Activated T-helper 2 cell treated with anti-CD3 and anti-CD28 coated beads, Interferon-gamma antibody, Interleukin-2, Interleukin-4, amounts not matched to agents 10 μg/mL and 5 μg/mL and 100 μg/mL, durations not matched to agents 14 hours and 24 hours and 36 hours (primary cell): ENCODE measurements at regions of chr1 and their contacts with region 1.

Region 1: GRCh38 chr1:174217787-174218574 is 58.7 kb downstream of the RABGAP1L start:
- DNase-seq: no peak
- H3K4me3 Mint-ChIP-seq: no peak overlapping the region
- H3K27ac Mint-ChIP-seq: no peak overlapping the region
- H3K4me1 Mint-ChIP-seq: no peaks in the 10 kb centered on the region
- H3K27me3 Mint-ChIP-seq: no peaks in the 10 kb centered on the region

Region 2: GRCh38 chr1:173507205-173507846 is 710.7 kb before region 1 on chr1:
- intact Hi-C with region 1: no loop called
- DNase-seq: no peak
- H3K4me3 Mint-ChIP-seq: no peak overlapping the region
- H3K27ac Mint-ChIP-seq: no peak overlapping the region
- H3K4me1 Mint-ChIP-seq: no peaks in the 10 kb centered on the region
- H3K27me3 Mint-ChIP-seq: peaks cover 7% of the 10 kb centered on the region

Region 3: DNA sequence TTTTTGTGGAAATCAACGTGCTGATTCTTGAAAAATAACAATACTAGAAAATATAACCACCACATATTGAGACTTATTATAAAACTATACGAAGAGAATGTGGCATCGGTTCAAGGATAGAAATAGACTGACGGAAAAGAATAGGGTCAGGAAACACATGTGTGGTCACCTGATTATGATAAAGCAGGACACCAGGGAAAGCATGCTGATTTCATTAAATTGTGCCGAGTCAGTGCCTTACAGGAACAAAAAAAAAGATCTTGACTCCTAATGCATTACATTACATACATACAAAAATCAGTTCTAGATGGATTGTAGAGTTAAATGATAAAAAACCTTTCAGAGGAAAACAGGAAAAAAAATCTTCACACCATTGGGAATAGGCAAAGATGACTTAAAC is 257.4 kb before region 1 on chr1:
- intact Hi-C with region 1: loop called (anchors 10 kb)
- DNase-seq: no peak
- H3K4me3 Mint-ChIP-seq: no peak overlapping the region
- H3K27ac Mint-ChIP-seq: no peak overlapping the region
- H3K4me1 Mint-ChIP-seq: peaks cover 3% of the 10 kb centered on the region
- H3K27me3 Mint-ChIP-seq: no peaks in the 10 kb centered on the region